Common myeloid progenitor, CD34-positive (primary cell): ENCODE measurements at regions of chr1 and their contacts with region 1.

Region 1: GRCh38 chr1:154955718-154956543 is at the start of gene PBXIP1:
- DNase-seq: peak; percentile 94 to 96 (median 94)
- H3K4me3 ChIP-seq: peak within 1 kb of the TSS; percentile 33 to 92 (median 81)
- H3K27ac ChIP-seq: peak within 1 kb of the TSS; percentile 100
- H3K4me1 ChIP-seq: peaks cover 29 to 74% (median 69%) of the 10 kb centered on the region in 4 experiments
- H3K27me3 ChIP-seq: no peaks in the 10 kb centered on the region

Region 2: GRCh38 chr1:154911691-154912550 is 44.0 kb before region 1 on chr1:
- CTCF ChIA-PET with region 1: no interaction called
- POLR2A ChIA-PET with region 1: no interaction called
- DNase-seq: no peak
- H3K4me3 ChIP-seq: no peak overlapping the region
- H3K27ac ChIP-seq: no peak overlapping the region
- H3K4me1 ChIP-seq: no peaks in the 10 kb centered on the region
- H3K27me3 ChIP-seq: no peaks in the 10 kb centered on the region

Region 3: GRCh38 chr1:154943649-154944400 is 12.1 kb before region 1 on chr1:
- CTCF ChIA-PET with region 1: interaction called, 6 read pairs
- POLR2A ChIA-PET with region 1: interaction called, 17 read pairs
- DNase-seq: peak; percentile 61 to 87 (median 85)
- H3K4me3 ChIP-seq: peak overlapping the region in 1 of 7 experiments; percentile 1
- H3K27ac ChIP-seq: peak overlapping the region in 1 of 2 experiments; percentile 77
- H3K4me1 ChIP-seq: peaks cover 12 to 74% (median 70%) of the 10 kb centered on the region in 4 experiments
- H3K27me3 ChIP-seq: no peaks in the 10 kb centered on the region